ENCODE measurements at regions of chr7 and their contacts with region 1.

Region 1: DNA sequence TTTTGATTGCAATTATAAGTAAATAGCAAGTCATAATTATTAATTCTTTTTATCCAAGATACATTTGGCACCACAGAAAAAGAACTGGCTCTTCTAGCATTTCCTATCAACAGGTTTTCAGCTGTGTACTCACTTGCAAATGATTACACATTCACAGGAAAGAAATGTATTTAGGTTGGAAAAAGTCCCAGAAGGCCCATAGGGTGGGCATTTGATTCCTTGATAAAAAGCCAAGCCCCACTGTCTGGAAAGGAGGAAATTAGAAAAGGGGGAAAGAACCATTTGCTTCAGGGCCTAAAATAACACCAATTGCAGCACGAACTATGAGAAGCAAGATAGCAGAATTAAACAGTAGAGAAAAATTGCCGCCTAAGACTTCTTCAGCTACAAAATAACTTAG is 80.8 kb upstream of the COL1A2 start:
- DNase-seq: peak; percentile 55
- ATAC-seq: peak; percentile 24; the same call in 1 of the 2 replicates
- H3K4me3 ChIP-seq: no peak overlapping the region
- H3K27ac ChIP-seq: no peak overlapping the region
- H3K4me1 ChIP-seq: peaks cover 3% of the 10 kb centered on the region
- H3K27me3 ChIP-seq: no peaks in the 10 kb centered on the region
- CTCF ChIP-seq: no peak
- POLR2A ChIP-seq: no peak
- RAD21 ChIP-seq: no peak

Region 2: GRCh38 chr7:94001396-94001795 is 312.5 kb before region 1 on chr7:
- CTCF ChIA-PET with region 1: no interaction called
- POLR2A ChIA-PET with region 1: no interaction called
- dilution Hi-C with region 1: no loop called
- in situ Hi-C with region 1: no loop called
- intact Hi-C with region 1: no loop called
- DNase-seq: peak; percentile 48
- ATAC-seq: no peak
- H3K4me3 ChIP-seq: no peak overlapping the region
- H3K27ac ChIP-seq: no peak overlapping the region
- H3K4me1 ChIP-seq: peaks cover 2% of the 10 kb centered on the region; the same call in 1 of the 2 replicates
- H3K27me3 ChIP-seq: no peaks in the 10 kb centered on the region
- CTCF ChIP-seq: no peak
- POLR2A ChIP-seq: no peak
- RAD21 ChIP-seq: no peak

Region 3: GRCh38 chr7:94028768-94029167 is 285.2 kb before region 1 on chr7:
- CTCF ChIA-PET with region 1: no interaction called
- POLR2A ChIA-PET with region 1: no interaction called
- dilution Hi-C with region 1: no loop called
- in situ Hi-C with region 1: no loop called
- intact Hi-C with region 1: no loop called
- DNase-seq: peak; percentile 83
- ATAC-seq: peak; percentile 84
- H3K4me3 ChIP-seq: no peak overlapping the region
- H3K27ac ChIP-seq: no peak overlapping the region
- H3K4me1 ChIP-seq: peaks cover 2% of the 10 kb centered on the region; the same call in 1 of the 2 replicates
- H3K27me3 ChIP-seq: peaks cover 14% of the 10 kb centered on the region
- CTCF ChIP-seq: no peak
- POLR2A ChIP-seq: no peak
- RAD21 ChIP-seq: no peak

Region 4: DNA sequence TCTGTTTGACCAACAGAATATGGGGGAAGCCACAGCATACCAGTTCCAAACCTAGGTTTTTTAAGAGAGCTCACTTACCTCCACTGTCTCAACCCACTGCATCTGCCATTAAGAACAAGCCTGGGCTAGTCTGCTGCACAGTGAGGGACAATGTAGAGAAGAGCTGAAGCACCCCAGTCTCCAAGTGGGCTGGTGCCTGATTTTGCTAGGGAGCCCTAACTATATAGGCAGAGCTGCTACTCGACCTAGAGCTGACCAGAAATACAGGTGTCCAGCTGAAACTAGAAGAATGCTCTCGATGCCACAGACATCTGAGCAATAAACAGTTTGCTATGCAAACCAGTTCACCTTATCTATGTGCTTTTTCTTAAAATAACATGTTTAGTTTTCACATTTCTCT is 202.9 kb before region 1 on chr7:
- CTCF ChIA-PET with region 1: no interaction called
- POLR2A ChIA-PET with region 1: no interaction called
- dilution Hi-C with region 1: no loop called
- in situ Hi-C with region 1: no loop called
- intact Hi-C with region 1: no loop called
- DNase-seq: no peak
- ATAC-seq: peak; percentile 60
- H3K4me3 ChIP-seq: no peak overlapping the region
- H3K27ac ChIP-seq: peak overlapping the region; percentile 15; the same call in 1 of the 2 replicates
- H3K4me1 ChIP-seq: peaks cover 5% of the 10 kb centered on the region
- H3K27me3 ChIP-seq: no peaks in the 10 kb centered on the region
- CTCF ChIP-seq: no peak
- POLR2A ChIP-seq: no peak
- RAD21 ChIP-seq: no peak

Region 5: DNA sequence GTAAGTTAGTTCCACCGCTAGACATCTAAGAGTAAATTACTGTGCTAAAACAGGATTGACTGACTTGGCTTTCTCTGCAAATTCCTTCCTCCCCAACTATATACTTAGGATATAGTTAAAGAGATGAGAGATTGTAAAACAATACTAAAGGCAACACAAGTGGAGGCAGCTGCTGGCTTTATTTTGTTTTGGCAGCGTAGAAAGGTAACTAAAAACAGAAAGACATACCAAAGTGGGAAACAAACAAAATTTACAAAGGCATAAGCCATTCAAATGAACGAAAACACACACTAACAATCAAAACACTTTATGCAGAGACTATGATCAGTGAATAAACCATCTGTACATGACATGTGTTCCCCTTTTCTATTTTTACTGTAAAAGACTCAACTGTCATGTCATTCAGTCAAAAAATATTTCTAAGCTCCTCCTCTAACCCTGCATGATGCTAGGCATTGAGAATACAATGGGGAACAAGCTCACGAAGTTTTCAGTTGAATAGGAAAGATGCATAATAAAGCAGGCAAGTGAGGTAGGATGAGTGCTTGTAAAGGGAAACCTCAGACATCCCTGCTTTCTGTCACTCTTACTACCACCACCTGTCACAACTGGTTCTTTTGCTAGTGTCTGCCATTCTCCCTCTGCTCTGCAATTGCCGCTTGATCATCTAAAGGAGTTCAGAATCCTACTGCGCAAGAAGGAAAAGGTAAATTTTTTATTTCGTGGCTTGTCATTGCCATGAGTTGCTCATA is 16.5 kb after region 1 on chr7:
- CTCF ChIA-PET with region 1: no interaction called
- POLR2A ChIA-PET with region 1: no interaction called
- dilution Hi-C with region 1: no loop called
- in situ Hi-C with region 1: no loop called
- intact Hi-C with region 1: loop called (anchors 2 kb)
- DNase-seq: no peak
- ATAC-seq: no peak
- H3K4me3 ChIP-seq: no peak overlapping the region
- H3K27ac ChIP-seq: no peak overlapping the region
- H3K4me1 ChIP-seq: peaks cover 4% of the 10 kb centered on the region
- H3K27me3 ChIP-seq: no peaks in the 10 kb centered on the region
- CTCF ChIP-seq: no peak
- POLR2A ChIP-seq: no peak
- RAD21 ChIP-seq: no peak

Measured in IMR-90 (cell line).